Posterior vena cava (tissue), 2 donors: ENCODE measurements at regions of chr2 and their contacts with region 1.

Region 1: DNA sequence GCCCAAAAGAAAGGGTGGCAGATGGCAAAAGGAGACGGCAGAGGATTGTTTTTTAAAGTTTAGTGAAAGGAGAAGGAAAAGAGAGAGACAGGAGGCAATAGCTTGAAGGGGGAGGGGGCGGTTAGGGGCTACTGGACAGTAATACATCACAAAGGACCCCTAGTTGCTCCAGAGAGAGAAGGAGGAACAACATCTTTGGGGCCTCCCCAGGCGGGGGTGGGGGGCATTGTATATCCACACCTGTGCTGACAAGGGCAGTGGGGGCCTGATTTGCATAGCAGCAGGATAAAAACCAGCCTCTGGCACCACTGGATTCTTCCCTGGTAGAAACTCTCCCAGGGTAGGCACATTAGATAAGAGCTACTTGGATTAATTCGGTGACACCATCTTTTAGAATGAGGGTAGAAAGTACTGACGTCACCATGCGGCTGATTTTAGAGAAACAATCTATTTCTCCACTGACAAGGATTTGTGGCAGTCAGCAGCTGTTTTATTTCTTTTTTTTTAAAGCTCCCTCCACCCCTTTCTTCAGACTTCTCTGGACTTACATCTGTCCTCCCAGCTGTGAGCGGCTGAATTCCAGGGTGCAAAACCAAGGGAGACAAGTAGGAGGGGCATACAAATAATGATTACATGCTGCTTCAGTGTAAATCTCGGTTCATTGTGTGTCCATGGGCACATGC is 199.8 kb upstream of the NRP2 start:
- DNase-seq: no peak

Region 2: GRCh38 chr2:204824778-204825453 is 657.6 kb before region 1 on chr2:
- intact Hi-C with region 1: no loop called
- DNase-seq: no peak

Region 3: GRCh38 chr2:205451901-205452512 is 30.5 kb before region 1 on chr2:
- intact Hi-C with region 1: no loop called
- DNase-seq: no peak

Region 4: GRCh38 chr2:205520311-205520710 is 37.8 kb after region 1 on chr2:
- intact Hi-C with region 1: loop called in 1 of 2 experiments (anchors 2 kb)
- DNase-seq: no peak